Naive thymus-derived CD4-positive, alpha-beta T cell (primary cell): ENCODE measurements at regions of chr2 and their contacts with region 1.

Region 1: GRCh38 chr2:239267288-239267951 is 133.4 kb downstream of the HDAC4 start:
- DNase-seq: peak; percentile 74 to 96 (median 94)
- ATAC-seq: peak; percentile 88
- H3K4me3 ChIP-seq: peak overlapping the region; percentile 85
- H3K4me3 Mint-ChIP-seq: peak overlapping the region; percentile 90 to 99 (median 95)
- H3K27ac ChIP-seq: peak overlapping the region; percentile 74
- H3K27ac Mint-ChIP-seq: peak overlapping the region; percentile 88 to 99 (median 98)
- H3K4me1 ChIP-seq: peaks cover 57 to 74% of the 10 kb centered on the region in 2 donors
- H3K4me1 Mint-ChIP-seq: peaks cover 55 to 98% (median 85%) of the 10 kb centered on the region in 7 donors
- H3K27me3 ChIP-seq: no peaks in the 10 kb centered on the region
- H3K27me3 Mint-ChIP-seq: peaks cover 0 to 4% (median 0%) of the 10 kb centered on the region in 5 donors

Region 2: DNA sequence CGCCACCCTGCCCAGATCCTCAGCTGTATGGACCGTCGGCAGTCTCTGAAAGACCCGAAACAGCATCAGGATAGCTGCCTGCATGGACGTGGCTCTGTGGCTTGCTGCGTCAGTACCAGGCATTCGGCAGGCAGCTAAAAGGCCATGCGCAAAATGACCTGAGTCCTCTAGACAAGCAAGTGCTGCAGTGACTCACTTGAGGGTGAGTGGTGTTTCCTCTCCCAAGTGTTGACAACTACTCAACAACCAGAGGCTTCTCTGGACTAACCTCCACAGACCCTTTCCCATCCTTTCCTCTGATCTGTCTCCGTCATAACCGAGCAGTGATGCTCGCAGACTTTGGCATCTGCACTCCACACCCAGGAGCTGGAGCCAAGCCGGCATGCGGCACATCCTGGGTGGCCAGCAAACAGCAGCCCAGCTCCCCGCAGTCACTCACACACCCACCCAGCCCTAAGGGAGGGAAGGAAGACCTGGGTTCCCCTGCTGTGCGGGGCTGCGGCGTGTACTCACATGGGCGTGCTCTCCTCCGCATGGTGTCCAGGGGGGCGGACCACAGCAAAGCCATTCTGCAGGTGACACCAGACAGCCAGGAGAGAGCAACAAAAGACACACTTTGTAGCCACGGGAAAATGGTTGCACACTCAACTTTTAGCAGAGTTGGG is 180.2 kb before region 1 on chr2:
- CTCF ChIA-PET with region 1: no interaction called
- POLR2A ChIA-PET with region 1: no interaction called
- intact Hi-C with region 1: no loop called
- DNase-seq: no peak
- ATAC-seq: no peak
- H3K4me3 ChIP-seq: no peak overlapping the region
- H3K4me3 Mint-ChIP-seq: no peak overlapping the region
- H3K27ac ChIP-seq: no peak overlapping the region
- H3K27ac Mint-ChIP-seq: peak overlapping the region in 2 of 9 donors; percentile 5 to 22
- H3K4me1 ChIP-seq: no peaks in the 10 kb centered on the region
- H3K4me1 Mint-ChIP-seq: peaks cover 0 to 8% (median 0%) of the 10 kb centered on the region in 7 donors
- H3K27me3 ChIP-seq: no peaks in the 10 kb centered on the region
- H3K27me3 Mint-ChIP-seq: no peaks in the 10 kb centered on the region

Region 3: GRCh38 chr2:239143858-239144718 is 123.3 kb before region 1 on chr2:
- CTCF ChIA-PET with region 1: interaction called, 18 read pairs
- POLR2A ChIA-PET with region 1: interaction called, 5 read pairs
- intact Hi-C with region 1: loop called (anchors 1 to 5 kb)
- DNase-seq: peak in 6 of 9 donors; percentile 16 to 47 (median 40)
- ATAC-seq: peak; percentile 63
- H3K4me3 ChIP-seq: no peak overlapping the region
- H3K4me3 Mint-ChIP-seq: no peak overlapping the region
- H3K27ac ChIP-seq: no peak overlapping the region
- H3K27ac Mint-ChIP-seq: peak overlapping the region in 3 of 9 donors; percentile 25 to 41 (median 33)
- H3K4me1 ChIP-seq: no peaks in the 10 kb centered on the region
- H3K4me1 Mint-ChIP-seq: peaks cover 0 to 18% (median 3%) of the 10 kb centered on the region in 7 donors
- H3K27me3 ChIP-seq: no peaks in the 10 kb centered on the region
- H3K27me3 Mint-ChIP-seq: no peaks in the 10 kb centered on the region

Region 4: DNA sequence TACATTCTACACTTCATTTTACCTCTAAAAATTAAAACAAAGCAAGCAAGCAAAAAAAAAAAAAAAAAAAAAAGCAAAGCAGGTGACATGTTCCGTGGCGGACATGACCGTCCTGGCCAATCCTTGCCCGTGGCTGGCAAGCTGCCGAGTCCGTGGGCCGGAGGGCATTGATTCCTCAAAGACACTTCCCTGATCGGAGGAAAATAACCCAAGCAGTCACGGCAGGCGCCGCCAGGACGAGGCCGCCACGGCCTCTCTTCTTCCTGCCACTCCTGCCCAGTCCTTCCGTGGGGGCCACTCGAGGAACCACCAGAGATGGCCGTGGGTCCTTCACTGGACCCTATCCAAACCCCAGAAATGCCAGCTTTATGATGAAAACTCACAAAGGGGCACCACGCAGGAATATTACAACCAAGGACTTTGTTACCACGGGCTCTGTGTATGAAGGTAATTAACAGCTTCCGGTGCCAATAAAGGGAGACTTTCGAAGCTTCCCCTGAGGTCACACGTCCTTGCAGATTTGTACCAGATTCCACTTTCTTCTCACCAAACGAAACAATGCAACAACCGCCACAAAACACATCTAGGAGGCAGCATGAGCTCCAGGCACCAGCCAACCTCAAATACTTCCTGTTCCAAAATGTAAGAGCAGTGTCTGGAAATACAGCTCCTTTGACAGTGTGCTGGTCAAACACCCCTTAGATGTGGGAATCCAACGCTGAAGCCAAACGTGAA is 36.9 kb before region 1 on chr2:
- CTCF ChIA-PET with region 1: interaction called, 5 read pairs
- POLR2A ChIA-PET with region 1: interaction called, 7 read pairs
- intact Hi-C with region 1: loop called (anchors 1 to 2 kb)
- DNase-seq: peak in 7 of 9 donors; percentile 25 to 58 (median 40)
- ATAC-seq: peak; percentile 53
- H3K4me3 ChIP-seq: peak overlapping the region; percentile 63
- H3K4me3 Mint-ChIP-seq: peak overlapping the region; percentile 20 to 87 (median 74)
- H3K27ac ChIP-seq: peak overlapping the region; percentile 72
- H3K27ac Mint-ChIP-seq: peak overlapping the region; percentile 75 to 95 (median 86)
- H3K4me1 ChIP-seq: peaks cover 10 to 45% of the 10 kb centered on the region in 2 donors
- H3K4me1 Mint-ChIP-seq: peaks cover 50 to 91% (median 75%) of the 10 kb centered on the region in 7 donors
- H3K27me3 ChIP-seq: no peaks in the 10 kb centered on the region
- H3K27me3 Mint-ChIP-seq: no peaks in the 10 kb centered on the region

Region 5: GRCh38 chr2:239298116-239298804 is 30.8 kb after region 1 on chr2:
- CTCF ChIA-PET with region 1: interaction called, 100 read pairs
- POLR2A ChIA-PET with region 1: interaction called, 362 read pairs
- intact Hi-C with region 1: loop called (anchors 1 kb)
- DNase-seq: peak in 8 of 9 donors; percentile 67 to 88 (median 84)
- ATAC-seq: peak; percentile 85
- H3K4me3 ChIP-seq: peak overlapping the region; percentile 66
- H3K4me3 Mint-ChIP-seq: peak overlapping the region; percentile 79 to 94 (median 90)
- H3K27ac ChIP-seq: peak overlapping the region; percentile 77
- H3K27ac Mint-ChIP-seq: peak overlapping the region; percentile 89 to 97 (median 93)
- H3K4me1 ChIP-seq: peaks cover 34 to 64% of the 10 kb centered on the region in 2 donors
- H3K4me1 Mint-ChIP-seq: peaks cover 30 to 95% (median 77%) of the 10 kb centered on the region in 7 donors
- H3K27me3 ChIP-seq: no peaks in the 10 kb centered on the region
- H3K27me3 Mint-ChIP-seq: no peaks in the 10 kb centered on the region

Region 6: GRCh38 chr2:239339726-239340601 is 72.5 kb after region 1 on chr2:
- CTCF ChIA-PET with region 1: no interaction called
- POLR2A ChIA-PET with region 1: no interaction called
- intact Hi-C with region 1: no loop called
- DNase-seq: no peak
- ATAC-seq: peak; percentile 68
- H3K4me3 ChIP-seq: no peak overlapping the region
- H3K4me3 Mint-ChIP-seq: peak overlapping the region in 8 of 10 donors; percentile 7 to 62 (median 44)
- H3K27ac ChIP-seq: no peak overlapping the region
- H3K27ac Mint-ChIP-seq: peak overlapping the region; percentile 38 to 94 (median 62)
- H3K4me1 ChIP-seq: peaks cover 11 to 17% of the 10 kb centered on the region in 2 donors
- H3K4me1 Mint-ChIP-seq: peaks cover 24 to 63% (median 37%) of the 10 kb centered on the region in 7 donors
- H3K27me3 ChIP-seq: no peaks in the 10 kb centered on the region
- H3K27me3 Mint-ChIP-seq: no peaks in the 10 kb centered on the region

Region 7: DNA sequence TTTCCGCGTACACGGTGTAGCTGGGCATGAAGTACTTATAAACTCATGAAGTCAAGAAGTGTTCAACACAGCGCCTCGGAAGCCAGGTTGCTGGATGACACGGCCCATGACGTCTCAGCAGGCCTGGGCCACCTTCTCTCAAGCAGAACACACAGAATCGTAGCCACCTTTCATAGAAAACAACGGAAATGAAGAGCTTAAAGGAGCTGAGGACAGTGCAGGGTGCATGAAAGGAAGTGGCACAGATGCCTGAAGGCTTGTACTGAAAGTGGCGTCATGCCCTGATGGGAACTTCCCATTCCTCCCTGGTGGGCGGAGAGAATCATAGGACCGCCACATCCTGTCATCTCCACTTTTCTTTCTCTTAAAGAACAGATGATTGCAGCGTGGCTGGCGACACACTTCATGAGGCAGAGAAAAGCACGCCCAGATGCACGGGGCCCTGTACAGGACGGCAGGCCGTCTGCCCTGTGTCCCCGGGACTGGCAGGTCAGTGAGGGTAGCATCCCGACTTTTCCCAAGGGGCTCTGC is 102.3 kb after region 1 on chr2:
- CTCF ChIA-PET with region 1: interaction called, 8 read pairs
- POLR2A ChIA-PET with region 1: interaction called, 20 read pairs
- intact Hi-C with region 1: loop called in 1 of 2 experiments (anchors 1 kb)
- DNase-seq: peak; percentile 39 to 95 (median 92)
- ATAC-seq: peak; percentile 96
- H3K4me3 ChIP-seq: peak overlapping the region; percentile 46
- H3K4me3 Mint-ChIP-seq: peak overlapping the region in 4 of 10 donors; percentile 81 to 87 (median 84)
- H3K27ac ChIP-seq: peak overlapping the region; percentile 96
- H3K27ac Mint-ChIP-seq: no peak overlapping the region
- H3K4me1 ChIP-seq: peaks cover 11 to 41% of the 10 kb centered on the region in 2 donors
- H3K4me1 Mint-ChIP-seq: peaks cover 0 to 22% (median 10%) of the 10 kb centered on the region in 7 donors
- H3K27me3 ChIP-seq: no peaks in the 10 kb centered on the region
- H3K27me3 Mint-ChIP-seq: no peaks in the 10 kb centered on the region

Region 8: DNA sequence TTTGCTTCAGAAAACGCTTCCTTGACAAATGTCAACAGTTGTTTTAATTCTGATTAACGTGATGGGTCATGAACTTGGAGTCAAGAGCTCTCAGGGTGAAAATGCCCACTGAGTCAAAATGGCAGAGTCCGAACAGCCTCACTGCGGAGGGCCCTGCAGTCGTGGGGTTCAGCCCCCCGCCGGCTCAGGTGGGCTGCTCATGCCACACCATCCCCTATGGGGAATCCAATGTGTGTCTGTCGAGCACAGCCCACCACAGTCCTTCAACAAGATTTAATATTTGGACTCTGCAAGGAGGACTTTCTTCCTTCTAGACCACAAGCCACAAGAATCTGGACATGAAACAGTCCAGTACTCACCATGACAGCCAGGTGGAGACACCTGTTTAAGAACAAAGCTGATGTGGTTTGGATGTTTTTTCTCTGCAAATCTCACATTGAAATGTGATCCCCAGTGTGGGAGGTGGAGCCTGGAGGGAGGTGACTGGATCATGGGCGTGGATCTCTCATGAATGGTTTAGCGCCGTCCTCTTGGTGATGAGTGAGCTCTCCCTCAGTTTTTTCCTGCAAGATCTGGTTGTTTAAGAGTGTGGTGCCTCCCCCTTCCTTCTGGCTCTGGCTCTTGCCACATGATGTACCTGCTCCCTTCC is 556.8 kb after region 1 on chr2:
- CTCF ChIA-PET with region 1: no interaction called
- POLR2A ChIA-PET with region 1: no interaction called
- intact Hi-C with region 1: no loop called
- DNase-seq: peak in 1 of 9 donors; percentile 3
- ATAC-seq: peak; percentile 26
- H3K4me3 ChIP-seq: no peak overlapping the region
- H3K4me3 Mint-ChIP-seq: no peak overlapping the region
- H3K27ac ChIP-seq: no peak overlapping the region
- H3K27ac Mint-ChIP-seq: no peak overlapping the region
- H3K4me1 ChIP-seq: no peaks in the 10 kb centered on the region
- H3K4me1 Mint-ChIP-seq: peaks cover 0 to 4% (median 0%) of the 10 kb centered on the region in 7 donors
- H3K27me3 ChIP-seq: no peaks in the 10 kb centered on the region
- H3K27me3 Mint-ChIP-seq: peaks cover 0 to 24% (median 5%) of the 10 kb centered on the region in 5 donors

Region 9: GRCh38 chr2:239882331-239882732 is 614.9 kb after region 1 on chr2:
- CTCF ChIA-PET with region 1: interaction called, 3 read pairs
- POLR2A ChIA-PET with region 1: no interaction called
- intact Hi-C with region 1: loop called in 1 of 2 experiments (anchors 1 kb)
- DNase-seq: peak in 8 of 9 donors; percentile 12 to 59 (median 44)
- ATAC-seq: peak; percentile 54
- H3K4me3 ChIP-seq: no peak overlapping the region
- H3K4me3 Mint-ChIP-seq: no peak overlapping the region
- H3K27ac ChIP-seq: no peak overlapping the region
- H3K27ac Mint-ChIP-seq: peak overlapping the region in 1 of 9 donors; percentile 45
- H3K4me1 ChIP-seq: peaks cover 0 to 6% of the 10 kb centered on the region in 2 donors
- H3K4me1 Mint-ChIP-seq: peaks cover 3 to 11% (median 6%) of the 10 kb centered on the region in 7 donors
- H3K27me3 ChIP-seq: no peaks in the 10 kb centered on the region
- H3K27me3 Mint-ChIP-seq: peaks cover 4 to 19% (median 12%) of the 10 kb centered on the region in 5 donors

Region 10: DNA sequence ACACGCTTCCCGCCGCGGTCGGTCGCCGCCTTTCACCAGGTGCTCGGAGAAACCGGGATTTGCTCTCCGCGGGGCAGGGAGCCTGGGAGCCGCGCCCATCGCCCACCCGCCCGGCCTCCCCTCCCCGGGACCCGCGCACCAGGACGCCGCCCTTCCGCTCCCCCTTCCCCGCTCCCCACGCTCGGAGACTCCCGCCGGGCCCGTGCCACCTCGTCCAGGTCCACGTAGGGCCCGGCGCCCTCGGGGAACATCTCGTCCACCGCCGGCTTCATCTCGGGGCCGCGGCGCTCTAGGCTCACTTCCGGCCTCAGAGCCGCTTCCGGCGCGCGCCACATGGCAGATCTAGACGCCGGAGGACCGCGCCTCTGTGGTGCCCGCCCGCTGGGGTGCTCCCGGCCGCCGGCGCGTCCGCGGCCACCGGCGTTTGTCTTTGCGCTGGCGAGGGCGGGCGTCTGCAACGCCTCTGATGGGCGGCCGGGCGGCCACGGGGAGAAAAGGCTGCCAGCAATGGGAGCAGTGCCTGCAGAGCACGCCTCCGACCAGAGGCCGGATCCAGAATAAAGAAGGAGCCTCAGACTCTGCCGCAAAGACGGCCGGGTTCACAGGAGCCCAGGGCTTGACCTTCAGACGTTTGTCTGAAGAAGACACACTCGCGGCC is 868.7 kb after region 1 on chr2 and contains the start of gene COPS9:
- CTCF ChIA-PET with region 1: no interaction called
- POLR2A ChIA-PET with region 1: no interaction called
- intact Hi-C with region 1: loop called in 1 of 2 experiments (anchors 5 kb)
- DNase-seq: peak; percentile 74 to 89 (median 82)
- ATAC-seq: peak; percentile 98
- H3K4me3 ChIP-seq: peak within 1 kb of the TSS; percentile 95
- H3K4me3 Mint-ChIP-seq: peak within 1 kb of the TSS; percentile 79 to 97 (median 93)
- H3K27ac ChIP-seq: peak within 1 kb of the TSS; percentile 75
- H3K27ac Mint-ChIP-seq: peak within 1 kb of the TSS; percentile 78 to 95 (median 90)
- H3K4me1 ChIP-seq: peaks cover 17 to 18% of the 10 kb centered on the region in 2 donors
- H3K4me1 Mint-ChIP-seq: peaks cover 21 to 32% (median 28%) of the 10 kb centered on the region in 7 donors
- H3K27me3 ChIP-seq: no peaks in the 10 kb centered on the region
- H3K27me3 Mint-ChIP-seq: peaks cover 0 to 4% (median 0%) of the 10 kb centered on the region in 5 donors
- total RNA-seq, gene COPS9: 53.7 to 106 (median 71.8) TPM